T-cell (primary cell): ENCODE measurements at regions of chr1 and their contacts with region 1.

Region 1: DNA sequence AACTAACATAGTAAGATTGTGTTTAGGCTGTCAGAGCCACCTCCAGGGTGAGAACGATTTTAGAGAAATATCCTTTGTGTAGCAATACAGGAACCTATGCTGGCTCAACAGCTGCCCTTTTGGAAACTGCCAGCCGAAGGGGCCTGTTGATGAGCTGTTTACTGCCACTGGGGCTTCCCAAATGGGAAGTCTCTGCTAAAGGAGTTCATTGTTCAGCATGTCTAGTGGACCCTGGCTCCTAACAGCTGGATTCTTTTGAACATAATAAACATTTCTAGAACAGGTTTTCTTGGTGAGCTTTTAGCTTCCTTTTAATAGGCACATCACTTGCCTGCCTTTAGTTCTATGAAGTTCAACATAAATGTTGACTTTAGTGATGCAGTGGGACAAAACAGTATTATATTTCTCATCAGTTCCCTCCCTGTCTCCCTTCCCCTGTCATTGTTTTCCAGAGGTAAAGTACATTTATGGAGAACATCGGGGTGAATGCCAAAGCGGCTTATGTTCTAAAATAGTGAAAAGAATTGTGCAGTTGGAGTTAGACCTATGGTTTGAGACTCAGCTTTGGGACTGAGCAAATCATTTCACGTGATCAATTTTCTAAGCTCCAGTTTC is 57.4 kb downstream of the UCK2 start:
- DNase-seq: peak in 1 of 35 experiments; percentile 4
- ATAC-seq: no peak
- H3K4me3 ChIP-seq: no peak overlapping the region
- H3K4me3 Mint-ChIP-seq: no peak overlapping the region
- H3K27ac ChIP-seq: no peak overlapping the region
- H3K27ac Mint-ChIP-seq: no peak overlapping the region
- H3K4me1 ChIP-seq: no peaks in the 10 kb centered on the region
- H3K4me1 Mint-ChIP-seq: peaks cover 3 to 5% (median 5%) of the 10 kb centered on the region in 3 donors
- H3K27me3 ChIP-seq: no peaks in the 10 kb centered on the region
- H3K27me3 Mint-ChIP-seq: peaks cover 0 to 3% of the 10 kb centered on the region in 2 donors

Region 2: GRCh38 chr1:165109012-165109411 is 775.8 kb before region 1 on chr1:
- CTCF ChIA-PET with region 1: no interaction called
- POLR2A ChIA-PET with region 1: no interaction called
- DNase-seq: no peak
- ATAC-seq: no peak
- H3K4me3 ChIP-seq: no peak overlapping the region
- H3K4me3 Mint-ChIP-seq: no peak overlapping the region
- H3K27ac ChIP-seq: no peak overlapping the region
- H3K27ac Mint-ChIP-seq: no peak overlapping the region
- H3K4me1 ChIP-seq: no peaks in the 10 kb centered on the region
- H3K4me1 Mint-ChIP-seq: no peaks in the 10 kb centered on the region
- H3K27me3 ChIP-seq: peaks cover 2 to 4% of the 10 kb centered on the region in 2 experiments
- H3K27me3 Mint-ChIP-seq: peaks cover 0 to 19% of the 10 kb centered on the region in 2 donors

Region 3: GRCh38 chr1:165768513-165769394 is 116.0 kb before region 1 on chr1 and contains the start of gene TMCO1:
- CTCF ChIA-PET with region 1: no interaction called
- POLR2A ChIA-PET with region 1: interaction called in 1 of 2 experiments, 15 read pairs
- DNase-seq: peak; percentile 75 to 98 (median 95)
- ATAC-seq: peak; percentile 97 to 99 (median 98)
- H3K4me3 ChIP-seq: peak within 1 kb of the TSS; percentile 75 to 78
- H3K4me3 Mint-ChIP-seq: peak within 1 kb of the TSS; percentile 95 to 99 (median 97)
- H3K27ac ChIP-seq: peak within 1 kb of the TSS; percentile 93
- H3K27ac Mint-ChIP-seq: peak within 1 kb of the TSS; percentile 98 to 100
- H3K4me1 ChIP-seq: peaks cover 9 to 16% of the 10 kb centered on the region in 2 experiments
- H3K4me1 Mint-ChIP-seq: peaks cover 65 to 68% (median 68%) of the 10 kb centered on the region in 3 donors
- H3K27me3 ChIP-seq: no peaks in the 10 kb centered on the region
- H3K27me3 Mint-ChIP-seq: no peaks in the 10 kb centered on the region
- total RNA-seq, gene TMCO1: 36.2 to 67.1 (median 51.4) TPM

Region 4: GRCh38 chr1:165815725-165816124 is 69.1 kb before region 1 on chr1:
- CTCF ChIA-PET with region 1: no interaction called
- POLR2A ChIA-PET with region 1: no interaction called
- DNase-seq: no peak
- ATAC-seq: no peak
- H3K4me3 ChIP-seq: no peak overlapping the region
- H3K4me3 Mint-ChIP-seq: no peak overlapping the region
- H3K27ac ChIP-seq: no peak overlapping the region
- H3K27ac Mint-ChIP-seq: no peak overlapping the region
- H3K4me1 ChIP-seq: no peaks in the 10 kb centered on the region
- H3K4me1 Mint-ChIP-seq: no peaks in the 10 kb centered on the region
- H3K27me3 ChIP-seq: peaks cover 0 to 9% of the 10 kb centered on the region in 2 experiments
- H3K27me3 Mint-ChIP-seq: peaks cover 3 to 5% of the 10 kb centered on the region in 2 donors